ENCODE measurements at regions of chr3 and their contacts with region 1.

Region 1: GRCh38 chr3:14178247-14179113 is at the starts of genes LSM3 and XPC:
- DNase-seq: peak; percentile 96 to 99
- ATAC-seq: peak; percentile 100
- H3K4me3 ChIP-seq: peak within 1 kb of the TSS; percentile 65 to 85
- H3K27ac ChIP-seq: peak within 1 kb of the TSS; percentile 68 to 97
- H3K4me1 ChIP-seq: peaks cover 0 to 9% of the 10 kb centered on the region in 2 donors
- H3K27me3 ChIP-seq: no peaks in the 10 kb centered on the region
- total RNA-seq, gene LSM3: 7.1 to 9.0 TPM
- total RNA-seq, gene XPC: 29.7 to 36.7 TPM

Region 2: GRCh38 chr3:14031271-14031670 is 147.2 kb before region 1 on chr3:
- intact Hi-C with region 1: no loop called
- DNase-seq: no peak
- ATAC-seq: no peak
- H3K4me3 ChIP-seq: no peak overlapping the region
- H3K27ac ChIP-seq: no peak overlapping the region
- H3K4me1 ChIP-seq: no peaks in the 10 kb centered on the region
- H3K27me3 ChIP-seq: no peaks in the 10 kb centered on the region

Region 3: DNA sequence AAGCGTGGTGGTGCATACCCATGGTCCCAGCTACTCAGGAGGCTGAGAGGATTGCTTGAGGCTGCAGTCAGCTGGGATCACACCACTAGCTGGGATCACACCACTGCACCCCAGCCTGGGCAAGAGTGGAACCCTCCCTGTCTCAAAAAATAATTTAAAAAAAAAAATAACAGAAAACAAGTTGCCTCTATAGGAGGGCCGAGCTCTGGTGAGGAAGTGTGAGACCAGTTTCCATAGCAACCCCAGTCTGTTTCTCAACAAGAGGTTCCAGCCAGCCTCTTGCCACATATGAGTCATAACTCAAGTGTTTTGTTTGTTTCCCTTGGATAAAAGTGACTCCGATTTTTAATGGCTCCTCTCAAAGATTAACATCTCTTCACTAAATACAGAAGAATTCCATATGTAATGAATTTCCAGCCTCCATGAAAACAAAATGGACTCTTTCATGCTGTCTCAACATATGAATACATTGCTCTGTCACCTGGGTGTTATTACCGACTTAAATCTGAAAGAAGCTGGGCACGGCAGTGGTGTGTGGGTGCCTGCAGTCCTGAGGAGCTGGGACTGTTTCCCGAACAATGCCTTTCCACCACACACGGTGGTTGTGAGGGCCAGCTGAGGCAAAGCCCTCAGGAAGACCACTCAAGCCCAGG is 33.9 kb before region 1 on chr3:
- intact Hi-C with region 1: loop called (anchors 2 to 5 kb)
- DNase-seq: peak; percentile 79 to 81
- ATAC-seq: peak; percentile 91
- H3K4me3 ChIP-seq: no peak overlapping the region
- H3K27ac ChIP-seq: peak overlapping the region; percentile 89 to 99
- H3K4me1 ChIP-seq: peaks cover 3 to 4% of the 10 kb centered on the region in 2 donors
- H3K27me3 ChIP-seq: no peaks in the 10 kb centered on the region